HepG2 (cell line): ENCODE measurements at regions of chr9 and their contacts with region 1.

Region 1: GRCh38 chr9:70120834-70121510 is 77.3 kb downstream of the MAMDC2 start:
- DNase-seq: no peak
- ATAC-seq: peak; percentile 78
- H3K4me3 ChIP-seq: no peak overlapping the region
- H3K27ac ChIP-seq: no peak overlapping the region
- H3K4me1 ChIP-seq: peaks cover 58% of the 10 kb centered on the region
- H3K27me3 ChIP-seq: peaks cover 0 to 5% of the 10 kb centered on the region in 2 experiments; a peak in 1 of 5 replicates
- CTCF ChIP-seq: peak; percentile 34
- EP300 ChIP-seq: no peak
- POLR2A ChIP-seq: no peak
- RAD21 ChIP-seq: no peak

Region 2: DNA sequence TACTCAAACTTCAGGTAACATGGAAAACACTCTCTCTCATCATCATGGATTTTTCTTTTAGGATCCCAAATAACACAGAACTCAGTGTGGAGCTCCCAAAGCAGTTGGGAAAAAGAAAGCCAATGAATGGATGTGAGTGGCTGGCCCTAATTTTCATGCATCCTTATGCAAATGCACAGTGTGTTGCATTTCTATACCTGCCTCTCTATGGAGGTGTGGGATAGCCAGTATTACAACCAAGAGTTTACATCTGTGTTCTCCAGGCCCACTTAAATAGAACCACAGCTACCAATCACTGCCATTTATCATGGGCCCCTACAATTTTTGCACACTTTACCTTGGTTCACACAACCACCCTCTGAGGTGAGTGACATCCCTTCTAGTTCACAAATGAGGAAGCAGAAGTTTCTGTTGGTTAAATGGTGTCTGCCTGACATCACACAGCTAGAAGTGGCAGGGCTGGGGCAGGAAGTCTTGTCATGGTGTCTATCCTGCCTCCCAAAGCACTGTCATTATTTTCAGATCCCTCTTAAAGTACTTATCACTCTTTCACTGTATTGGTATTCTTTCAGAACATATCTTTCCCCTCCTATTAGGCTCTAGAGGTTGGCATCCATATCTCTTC is 60.0 kb before region 1 on chr9:
- CTCF ChIA-PET with region 1: no interaction called
- POLR2A ChIA-PET with region 1: no interaction called
- in situ Hi-C with region 1: no loop called
- intact Hi-C with region 1: no loop called
- DNase-seq: no peak
- ATAC-seq: no peak
- H3K4me3 ChIP-seq: no peak overlapping the region
- H3K27ac ChIP-seq: no peak overlapping the region
- H3K4me1 ChIP-seq: no peaks in the 10 kb centered on the region
- H3K27me3 ChIP-seq: no peaks in the 10 kb centered on the region
- CTCF ChIP-seq: no peak
- EP300 ChIP-seq: no peak
- POLR2A ChIP-seq: no peak
- RAD21 ChIP-seq: no peak

Region 3: GRCh38 chr9:70080481-70081119 is 40.4 kb before region 1 on chr9:
- CTCF ChIA-PET with region 1: no interaction called
- POLR2A ChIA-PET with region 1: no interaction called
- in situ Hi-C with region 1: no loop called
- intact Hi-C with region 1: no loop called
- DNase-seq: peak; percentile 3
- ATAC-seq: peak; percentile 74
- H3K4me3 ChIP-seq: no peak overlapping the region
- H3K27ac ChIP-seq: no peak overlapping the region
- H3K4me1 ChIP-seq: no peaks in the 10 kb centered on the region; the same call in 1 of the 2 replicates
- H3K27me3 ChIP-seq: peaks cover 0 to 7% of the 10 kb centered on the region in 2 experiments; a peak in 1 of 5 replicates
- CTCF ChIP-seq: no peak
- EP300 ChIP-seq: no peak
- POLR2A ChIP-seq: no peak
- RAD21 ChIP-seq: no peak

Region 4: DNA sequence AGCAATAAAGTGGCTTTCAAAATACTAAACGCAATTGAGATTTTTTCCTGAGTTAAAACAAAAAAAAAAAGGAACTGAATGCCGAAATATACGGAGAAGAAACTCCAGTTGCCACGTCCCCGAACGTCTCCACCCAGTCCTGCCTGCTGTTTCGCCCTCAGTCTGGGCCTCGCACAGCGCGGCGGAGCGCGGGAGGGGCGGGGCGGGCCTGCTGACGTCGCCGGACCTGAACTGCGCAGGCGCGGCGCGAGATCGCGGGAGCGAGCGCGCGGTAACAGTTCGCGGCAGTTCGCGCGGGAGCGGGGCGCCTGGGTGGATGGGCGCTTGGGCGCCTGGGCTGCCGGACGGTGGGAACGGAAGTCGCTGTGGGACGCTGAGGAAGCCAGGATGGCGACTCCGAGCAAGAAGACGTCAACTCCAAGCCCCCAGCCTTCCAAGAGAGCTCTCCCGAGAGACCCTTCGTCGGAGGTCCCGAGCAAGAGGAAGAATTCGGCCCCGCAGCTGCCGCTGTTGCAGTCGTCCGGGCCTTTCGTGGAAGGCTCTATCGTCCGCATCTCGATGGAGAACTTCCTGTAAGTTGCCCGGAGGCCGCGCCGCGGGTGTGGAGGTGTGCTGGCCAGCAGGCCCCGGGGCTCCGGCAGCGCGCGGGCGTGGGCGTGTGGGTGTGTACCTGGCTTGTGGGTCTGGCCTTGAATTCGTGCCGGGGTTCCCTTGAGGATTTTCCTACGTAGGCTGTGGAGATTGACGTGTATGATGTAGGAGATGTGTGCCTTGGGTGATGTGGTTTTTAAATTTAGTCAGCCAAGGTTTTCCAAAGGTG is 137.9 kb after region 1 on chr9 and contains the start of gene SMC5:
- CTCF ChIA-PET with region 1: no interaction called
- POLR2A ChIA-PET with region 1: no interaction called
- in situ Hi-C with region 1: no loop called
- intact Hi-C with region 1: loop called (anchors 5 kb)
- DNase-seq: peak; percentile 80
- ATAC-seq: peak; percentile 91
- H3K4me3 ChIP-seq: peak within 1 kb of the TSS; percentile 84 to 99 (median 95)
- H3K27ac ChIP-seq: peak within 1 kb of the TSS; percentile 96
- H3K4me1 ChIP-seq: peaks cover 63% of the 10 kb centered on the region
- H3K27me3 ChIP-seq: no peaks in the 10 kb centered on the region; a peak in 2 of 5 replicates
- CTCF ChIP-seq: no peak
- EP300 ChIP-seq: 0 out of 4 replicates have a peak, but pooled peaks of 1 of the 2 experiments have one; percentile 10
- POLR2A ChIP-seq: peak; percentile 93 to 94
- RAD21 ChIP-seq: peak; percentile 60
- total RNA-seq, gene SMC5: 26.7 and 29.4 TPM in 2 replicates